ENCODE measurements at regions of chr1 and their contacts with region 1.

Region 1: GRCh38 chr1:15603050-15603965 is 13.9 kb upstream of the DDI2 start:
- DNase-seq: peak; percentile 93
- ATAC-seq: peak; percentile 91
- H3K4me3 ChIP-seq: peak overlapping the region; percentile 69 to 85 (median 70)
- H3K27ac ChIP-seq: peak overlapping the region; percentile 69
- H3K4me1 ChIP-seq: peaks cover 56% of the 10 kb centered on the region
- H3K27me3 ChIP-seq: no peaks in the 10 kb centered on the region; a peak in 1 of 5 replicates
- CTCF ChIP-seq: no peak
- EP300 ChIP-seq: no peak
- POLR2A ChIP-seq: peak; percentile 66 to 87
- RAD21 ChIP-seq: peak; percentile 13; the same call in 1 of the 2 replicates

Region 2: GRCh38 chr1:15476927-15477326 is 126.4 kb before region 1 on chr1:
- CTCF ChIA-PET with region 1: no interaction called
- POLR2A ChIA-PET with region 1: no interaction called
- in situ Hi-C with region 1: no loop called
- intact Hi-C with region 1: no loop called
- DNase-seq: no peak
- ATAC-seq: no peak
- H3K4me3 ChIP-seq: no peak overlapping the region
- H3K27ac ChIP-seq: no peak overlapping the region
- H3K4me1 ChIP-seq: no peaks in the 10 kb centered on the region
- H3K27me3 ChIP-seq: peaks cover 0 to 1% of the 10 kb centered on the region in 2 experiments; a peak in 1 of 5 replicates
- CTCF ChIP-seq: no peak
- EP300 ChIP-seq: no peak
- POLR2A ChIP-seq: no peak
- RAD21 ChIP-seq: no peak

Region 3: GRCh38 chr1:15526490-15527339 is 76.6 kb before region 1 on chr1 and contains the start of gene DNAJC16:
- CTCF ChIA-PET with region 1: no interaction called
- POLR2A ChIA-PET with region 1: interaction called, 3 read pairs
- in situ Hi-C with region 1: no loop called
- intact Hi-C with region 1: loop called (anchors 10 kb)
- DNase-seq: peak; percentile 100
- ATAC-seq: peak; percentile 83
- H3K4me3 ChIP-seq: peak within 1 kb of the TSS; percentile 69 to 96 (median 89)
- H3K27ac ChIP-seq: peak within 1 kb of the TSS; percentile 91
- H3K4me1 ChIP-seq: peaks cover 36% of the 10 kb centered on the region
- H3K27me3 ChIP-seq: no peaks in the 10 kb centered on the region; a peak in 1 of 5 replicates
- CTCF ChIP-seq: peak; percentile 65
- EP300 ChIP-seq: no peak
- POLR2A ChIP-seq: peak; percentile 81 to 85
- RAD21 ChIP-seq: no peak; the same call in 1 of the 2 replicates
- total RNA-seq, gene DNAJC16: 10.7 and 15.4 TPM in 2 replicates

Region 4: GRCh38 chr1:15550573-15550972 is 52.7 kb before region 1 on chr1:
- CTCF ChIA-PET with region 1: no interaction called
- POLR2A ChIA-PET with region 1: no interaction called
- in situ Hi-C with region 1: no loop called
- intact Hi-C with region 1: no loop called
- DNase-seq: no peak
- ATAC-seq: no peak
- H3K4me3 ChIP-seq: no peak overlapping the region
- H3K27ac ChIP-seq: no peak overlapping the region
- H3K4me1 ChIP-seq: peaks cover under 1% of the 10 kb centered on the region
- H3K27me3 ChIP-seq: no peaks in the 10 kb centered on the region
- CTCF ChIP-seq: no peak
- EP300 ChIP-seq: no peak
- POLR2A ChIP-seq: no peak
- RAD21 ChIP-seq: no peak

Region 5: DNA sequence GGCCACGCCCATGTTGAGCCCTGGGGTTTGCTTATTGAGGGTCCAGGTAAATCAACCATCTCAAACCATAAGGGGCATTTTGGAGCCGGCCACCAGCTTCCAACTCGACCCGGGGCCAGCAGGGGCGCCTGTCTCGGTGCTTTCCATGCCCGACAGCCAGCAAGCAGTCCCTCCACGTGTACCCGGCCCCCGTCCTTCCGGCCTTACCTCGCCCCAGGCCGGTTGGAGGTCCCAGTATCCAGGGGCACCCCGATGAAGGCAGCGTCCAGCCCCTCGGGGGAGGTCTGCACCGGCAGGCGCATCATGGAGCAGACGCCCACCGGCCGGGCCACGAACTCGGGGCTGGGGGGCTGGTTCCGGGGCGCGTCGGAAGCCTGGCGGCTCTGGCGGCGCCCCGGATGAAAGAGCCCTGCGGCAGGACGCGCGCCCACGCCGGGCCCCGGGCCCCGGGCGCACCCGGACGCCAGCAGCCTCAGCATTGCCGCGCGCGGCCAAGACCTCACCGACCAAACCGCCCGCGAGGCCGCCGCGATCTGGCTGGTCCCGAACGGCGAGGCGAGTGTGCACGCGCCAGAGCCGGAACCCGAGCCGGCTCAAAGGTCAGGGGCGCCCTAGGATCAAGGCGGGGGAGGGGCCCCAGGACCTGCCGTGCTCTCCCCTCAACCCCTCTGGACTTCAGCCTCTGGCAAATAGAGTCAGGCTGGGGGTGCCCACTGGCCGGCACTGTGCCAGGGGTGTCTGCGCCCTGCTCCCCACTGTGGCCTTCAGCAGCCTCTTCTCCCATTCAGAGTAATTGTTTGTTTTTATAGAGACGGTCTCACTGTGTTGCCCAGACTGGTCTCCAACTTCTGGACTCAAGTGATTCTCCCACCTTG is 18.6 kb before region 1 on chr1 and contains the start of gene AGMAT:
- CTCF ChIA-PET with region 1: no interaction called
- POLR2A ChIA-PET with region 1: interaction called, 13 read pairs
- in situ Hi-C with region 1: no loop called
- intact Hi-C with region 1: no loop called
- DNase-seq: peak; percentile 91
- ATAC-seq: peak; percentile 93
- H3K4me3 ChIP-seq: peak within 1 kb of the TSS; percentile 72 to 85 (median 84)
- H3K27ac ChIP-seq: peak within 1 kb of the TSS; percentile 100
- H3K4me1 ChIP-seq: peaks cover 47% of the 10 kb centered on the region
- H3K27me3 ChIP-seq: no peaks in the 10 kb centered on the region
- CTCF ChIP-seq: peak; percentile 63
- EP300 ChIP-seq: peak; percentile 80 to 84
- POLR2A ChIP-seq: peak; percentile 88 to 93
- RAD21 ChIP-seq: no peak; the same call in 1 of the 2 replicates
- total RNA-seq, gene AGMAT: 174 and 216 TPM in 2 replicates

Region 6: GRCh38 chr1:15736038-15736889 is 133.0 kb after region 1 on chr1 and contains the start of gene SLC25A34:
- CTCF ChIA-PET with region 1: no interaction called
- POLR2A ChIA-PET with region 1: interaction called, 5 read pairs
- in situ Hi-C with region 1: loop called (anchors 5 kb)
- intact Hi-C with region 1: loop called (anchors 5 kb)
- DNase-seq: peak; percentile 42
- ATAC-seq: peak; percentile 51
- H3K4me3 ChIP-seq: peak within 1 kb of the TSS in 2 of 3 experiments; percentile 25 to 53; a peak in 4 of 6 replicates
- H3K27ac ChIP-seq: no peak within 1 kb of the TSS
- H3K4me1 ChIP-seq: peaks cover 59% of the 10 kb centered on the region
- H3K27me3 ChIP-seq: no peaks in the 10 kb centered on the region
- CTCF ChIP-seq: peak; percentile 55; the same call in 1 of the 2 replicates
- EP300 ChIP-seq: no peak
- POLR2A ChIP-seq: no peak
- RAD21 ChIP-seq: peak; percentile 59; the same call in 1 of the 2 replicates
- total RNA-seq, gene SLC25A34: 0.13 TPM in 1 of 2 replicates, not detected in the other

Region 7: DNA sequence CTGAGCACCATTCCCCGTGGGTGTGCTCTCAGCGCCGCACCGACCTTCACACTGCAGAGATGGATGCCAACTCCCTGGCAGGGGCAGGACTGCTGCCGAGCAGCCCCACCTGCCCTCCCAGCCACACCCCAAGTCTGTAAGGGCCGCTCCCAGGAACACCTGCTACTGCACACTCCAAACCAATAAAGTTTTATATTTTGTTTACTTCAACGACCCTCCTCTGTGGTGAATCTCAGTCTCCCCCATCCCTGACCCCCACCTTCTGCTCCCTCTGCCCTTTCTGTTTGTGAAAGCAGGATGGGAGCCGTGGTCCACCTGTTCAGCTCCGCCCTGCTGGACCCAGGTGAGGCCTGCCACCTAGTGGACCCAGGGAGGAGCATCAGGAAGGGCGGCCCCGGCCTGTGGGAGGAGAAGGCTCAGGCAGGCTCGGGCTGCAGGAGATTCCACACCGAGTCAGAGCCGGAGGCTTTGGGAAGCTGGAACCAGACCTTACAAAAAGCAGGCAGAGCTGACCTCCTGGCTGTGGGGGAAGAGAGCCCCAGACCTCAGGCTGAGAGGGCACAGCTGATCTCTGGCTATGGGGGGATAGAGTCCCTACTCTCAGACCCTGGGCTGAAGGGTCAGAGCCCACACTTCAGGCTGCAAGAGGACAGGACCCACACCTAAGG is 138.0 kb after region 1 on chr1:
- CTCF ChIA-PET with region 1: no interaction called
- POLR2A ChIA-PET with region 1: interaction called, 5 read pairs
- in situ Hi-C with region 1: loop called (anchors 5 kb)
- intact Hi-C with region 1: loop called (anchors 5 kb)
- DNase-seq: peak; percentile 76
- ATAC-seq: peak; percentile 77
- H3K4me3 ChIP-seq: peak overlapping the region; percentile 4 to 67 (median 39); a peak in 4 of 6 replicates
- H3K27ac ChIP-seq: no peak overlapping the region
- H3K4me1 ChIP-seq: peaks cover 79% of the 10 kb centered on the region
- H3K27me3 ChIP-seq: no peaks in the 10 kb centered on the region
- CTCF ChIP-seq: peak; percentile 99
- EP300 ChIP-seq: no peak
- POLR2A ChIP-seq: no peak
- RAD21 ChIP-seq: peak; percentile 86